OCI-LY7 (cell line): ENCODE measurements at regions of chr10 and their contacts with region 1.

Region 1: GRCh38 chr10:92640110-92640509 is 47.2 kb downstream of the KIF11 start:
- DNase-seq: no peak
- H3K4me3 ChIP-seq: no peak overlapping the region
- H3K27ac ChIP-seq: no peak overlapping the region
- H3K4me1 ChIP-seq: no peaks in the 10 kb centered on the region
- CTCF ChIP-seq: no peak

Region 2: GRCh38 chr10:92604841-92605240 is 35.3 kb before region 1 on chr10:
- CTCF ChIA-PET with region 1: no interaction called
- POLR2A ChIA-PET with region 1: interaction called, 3 read pairs
- intact Hi-C with region 1: loop called (anchors 5 kb)
- DNase-seq: no peak
- H3K4me3 ChIP-seq: no peak overlapping the region
- H3K27ac ChIP-seq: no peak overlapping the region
- H3K4me1 ChIP-seq: peaks cover 19% of the 10 kb centered on the region
- CTCF ChIP-seq: no peak